Transverse colon (tissue), 4 donors: ENCODE measurements at regions of chr10 and their contacts with region 1.

Region 1: GRCh38 chr10:4849555-4850242 is 23.7 kb downstream of the AKR1E2 start:
- DNase-seq: peak; percentile 93
- H3K4me3 ChIP-seq: no peak overlapping the region
- H3K27ac ChIP-seq: peak overlapping the region in 1 of 4 donors; percentile 8
- H3K4me1 ChIP-seq: peaks cover 0 to 8% (median 0%) of the 10 kb centered on the region in 4 donors
- H3K27me3 ChIP-seq: no peaks in the 10 kb centered on the region
- CTCF ChIP-seq: peak; percentile 94 to 100 (median 97)
- EP300 ChIP-seq: no peak
- POLR2A ChIP-seq: no peak

Region 2: GRCh38 chr10:4918236-4918635 is 68.5 kb after region 1 on chr10:
- in situ Hi-C with region 1: no loop called
- intact Hi-C with region 1: no loop called
- DNase-seq: no peak
- H3K4me3 ChIP-seq: no peak overlapping the region
- H3K27ac ChIP-seq: no peak overlapping the region
- H3K4me1 ChIP-seq: no peaks in the 10 kb centered on the region
- H3K27me3 ChIP-seq: no peaks in the 10 kb centered on the region
- CTCF ChIP-seq: no peak
- EP300 ChIP-seq: no peak
- POLR2A ChIP-seq: no peak

Region 3: DNA sequence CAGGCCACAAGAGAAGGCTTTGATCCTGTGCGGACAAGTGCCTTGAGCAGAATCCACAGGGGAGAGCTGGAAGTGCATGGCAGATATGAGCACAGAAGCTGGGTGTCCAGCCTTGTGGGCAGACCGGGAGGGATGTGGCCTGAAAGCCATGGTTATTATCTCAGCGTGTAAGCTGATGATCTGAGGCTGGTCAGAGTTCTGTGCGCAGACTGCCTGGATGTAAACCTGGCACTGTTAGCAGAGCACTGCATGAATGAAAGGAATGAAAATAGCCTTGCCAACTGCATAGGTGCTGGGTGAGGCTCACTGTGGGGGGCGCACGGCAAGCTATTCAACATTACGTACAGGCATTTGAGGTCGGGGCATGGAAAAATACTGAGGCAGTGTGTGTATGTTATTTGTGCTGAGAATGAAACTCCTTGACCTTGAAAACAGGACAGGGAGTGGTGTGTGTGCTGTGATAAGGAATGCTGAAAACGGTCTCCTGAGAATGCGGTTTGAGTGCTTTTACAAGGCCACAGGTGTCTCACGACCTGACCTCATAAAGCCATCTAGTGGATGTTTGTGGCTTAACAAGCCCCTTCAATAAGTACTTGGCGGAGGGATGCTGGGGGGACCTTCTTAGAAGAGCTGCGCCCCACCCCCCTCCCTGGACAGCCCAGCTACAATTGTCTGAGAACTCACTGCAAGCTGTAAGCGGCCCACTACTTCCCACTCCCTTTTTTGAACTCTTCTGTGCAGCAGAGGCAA is 132.2 kb after region 1 on chr10:
- in situ Hi-C with region 1: no loop called
- intact Hi-C with region 1: loop called (anchors 5 kb)
- DNase-seq: peak; percentile 51
- H3K4me3 ChIP-seq: no peak overlapping the region
- H3K27ac ChIP-seq: peak overlapping the region; percentile 50 to 67 (median 62)
- H3K4me1 ChIP-seq: peaks cover 0 to 15% (median 8%) of the 10 kb centered on the region in 4 donors
- H3K27me3 ChIP-seq: no peaks in the 10 kb centered on the region
- CTCF ChIP-seq: peak; percentile 31 to 74 (median 49)
- EP300 ChIP-seq: no peak
- POLR2A ChIP-seq: no peak

Region 4: DNA sequence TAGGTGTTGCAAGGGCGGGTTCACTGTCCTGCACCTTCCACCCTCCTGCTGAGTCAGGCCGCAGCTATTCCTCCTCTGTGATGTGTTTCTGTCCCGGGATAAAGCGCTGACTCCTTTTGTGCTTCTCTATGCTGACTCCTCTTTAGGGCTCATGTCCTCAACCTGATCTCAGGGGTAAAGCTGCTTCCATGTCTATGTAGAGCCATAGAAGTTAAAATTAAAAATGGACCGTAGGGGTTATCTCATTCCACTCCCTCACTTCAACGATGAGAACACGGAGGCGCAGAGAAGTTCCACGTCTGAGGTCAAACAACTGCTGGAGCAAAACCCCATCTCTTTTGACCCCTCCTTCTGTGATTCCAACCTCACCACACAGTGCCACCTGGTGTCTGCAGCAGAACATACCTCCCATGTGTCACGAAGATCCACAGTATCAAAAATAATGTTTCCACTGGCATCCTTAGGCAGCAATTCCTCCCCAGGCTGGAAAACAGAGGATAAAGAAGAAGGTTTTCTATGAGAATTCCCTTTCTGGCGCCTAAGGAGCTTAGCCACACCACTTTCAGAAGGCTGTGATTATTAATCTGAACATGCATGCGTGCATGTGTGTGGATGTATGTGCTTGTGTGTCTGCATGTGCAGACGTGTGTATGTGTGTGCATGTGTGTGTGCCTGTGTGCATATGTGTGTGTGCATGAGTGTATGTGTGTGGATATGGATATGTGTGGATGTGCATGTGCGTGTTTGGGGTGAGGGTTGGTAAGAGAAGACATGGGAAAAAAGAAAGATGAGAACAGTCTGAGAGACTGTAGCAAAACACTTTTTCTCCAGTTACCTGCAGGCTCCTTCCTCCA is 433.8 kb after region 1 on chr10:
- in situ Hi-C with region 1: loop called in 2 of 4 experiments (anchors 5 to 10 kb)
- intact Hi-C with region 1: loop called (anchors 2 kb)
- DNase-seq: peak; percentile 76
- H3K4me3 ChIP-seq: no peak overlapping the region
- H3K27ac ChIP-seq: no peak overlapping the region
- H3K4me1 ChIP-seq: peaks cover 0 to 5% (median 0%) of the 10 kb centered on the region in 4 donors
- H3K27me3 ChIP-seq: no peaks in the 10 kb centered on the region
- CTCF ChIP-seq: peak; percentile 61 to 85 (median 63)
- EP300 ChIP-seq: no peak
- POLR2A ChIP-seq: no peak

Region 5: GRCh38 chr10:5385224-5385623 is 535.5 kb after region 1 on chr10:
- in situ Hi-C with region 1: loop called (anchors 10 to 25 kb)
- intact Hi-C with region 1: no loop called
- DNase-seq: no peak
- H3K4me3 ChIP-seq: no peak overlapping the region
- H3K27ac ChIP-seq: no peak overlapping the region
- H3K4me1 ChIP-seq: no peaks in the 10 kb centered on the region
- H3K27me3 ChIP-seq: no peaks in the 10 kb centered on the region
- CTCF ChIP-seq: no peak
- EP300 ChIP-seq: no peak
- POLR2A ChIP-seq: no peak

Region 6: DNA sequence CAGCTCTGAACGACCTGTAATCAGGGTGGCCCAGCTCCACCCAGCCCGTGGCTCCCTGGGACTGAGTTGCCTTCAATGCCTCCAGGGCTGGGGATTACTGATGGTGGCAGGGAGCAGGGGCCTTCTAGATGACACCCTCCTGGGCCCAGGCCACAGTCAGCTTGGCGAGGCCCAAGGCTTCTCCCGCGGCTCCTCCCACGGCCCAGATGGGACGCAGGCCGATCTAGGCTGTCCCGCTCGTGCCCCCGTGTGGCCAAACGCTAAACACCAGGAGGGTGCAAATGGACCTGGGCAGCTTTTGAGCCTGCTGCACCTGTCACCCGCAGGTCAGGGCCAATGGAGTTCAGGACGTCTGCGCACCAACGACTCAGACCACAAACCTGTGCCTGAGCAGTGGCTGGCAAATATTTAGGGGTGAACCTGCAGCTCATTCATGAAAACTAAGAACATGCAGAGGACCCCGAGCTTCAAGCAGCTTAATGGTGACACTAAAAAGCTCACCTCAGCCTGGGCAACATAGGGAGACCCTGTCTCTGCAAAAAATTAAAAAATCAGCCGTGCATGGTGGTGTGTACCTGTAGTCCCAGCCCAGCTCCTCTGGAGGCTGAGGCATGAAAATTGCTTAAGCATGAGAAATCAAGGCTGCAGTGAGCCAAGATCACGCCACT is 773.5 kb after region 1 on chr10:
- in situ Hi-C with region 1: loop called in 1 of 4 experiments (anchors 25 kb)
- intact Hi-C with region 1: no loop called
- DNase-seq: peak; percentile 95
- H3K4me3 ChIP-seq: no peak overlapping the region
- H3K27ac ChIP-seq: peak overlapping the region; percentile 37 to 67 (median 56)
- H3K4me1 ChIP-seq: peaks cover 7 to 25% (median 15%) of the 10 kb centered on the region in 4 donors
- H3K27me3 ChIP-seq: no peaks in the 10 kb centered on the region
- CTCF ChIP-seq: peak; percentile 88 to 97 (median 94)
- EP300 ChIP-seq: no peak
- POLR2A ChIP-seq: no peak

Region 7: GRCh38 chr10:6144406-6145165 is 1294.9 kb after region 1 on chr10:
- in situ Hi-C with region 1: no loop called
- intact Hi-C with region 1: no loop called
- DNase-seq: peak; percentile 93
- H3K4me3 ChIP-seq: peak overlapping the region; percentile 74 to 89 (median 80)
- H3K27ac ChIP-seq: peak overlapping the region; percentile 87 to 95 (median 90)
- H3K4me1 ChIP-seq: peaks cover 6 to 42% (median 21%) of the 10 kb centered on the region in 4 donors
- H3K27me3 ChIP-seq: no peaks in the 10 kb centered on the region
- CTCF ChIP-seq: no peak
- EP300 ChIP-seq: no peak
- POLR2A ChIP-seq: peak; percentile 55